SK-N-SH (cell line): ENCODE measurements at regions of chr10 and their contacts with region 1.

Region 1: DNA sequence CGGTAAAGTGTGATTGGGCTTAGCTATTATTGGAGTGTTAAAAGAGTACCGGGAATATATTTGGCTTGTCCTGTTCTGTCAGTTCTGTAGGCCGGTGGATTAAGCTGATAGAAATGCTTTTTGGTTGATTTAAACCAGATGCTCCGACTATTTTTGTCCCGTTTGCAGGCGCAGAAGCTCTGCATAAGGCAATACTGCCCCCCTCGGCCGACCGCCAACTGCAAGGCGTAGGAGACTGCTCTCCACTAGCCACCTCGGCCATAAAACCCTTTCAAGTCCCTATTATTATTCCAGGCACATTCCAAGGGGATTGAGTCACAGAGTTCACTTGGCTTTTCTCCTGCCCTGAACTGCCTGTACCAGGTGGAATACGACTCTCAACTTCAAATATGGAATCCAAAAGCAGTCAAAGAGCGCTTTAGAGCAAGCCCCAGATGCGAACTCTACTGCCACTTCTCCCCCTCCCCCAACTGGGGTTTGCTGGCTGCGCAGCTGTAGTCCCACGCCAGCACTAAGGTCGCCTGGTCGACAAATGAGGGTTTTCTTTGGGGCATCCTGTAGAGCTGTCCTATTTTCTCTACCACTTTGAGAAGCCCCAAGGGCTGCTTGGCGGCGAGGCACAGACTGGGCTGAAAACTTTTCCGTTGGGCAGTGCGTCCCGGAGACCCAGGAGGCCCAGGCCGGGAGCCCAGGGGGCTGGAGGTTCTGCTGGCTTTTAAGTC is 108.3 kb downstream of the REEP3 start:
- DNase-seq: peak; percentile 65
- H3K4me3 ChIP-seq: peak overlapping the region; percentile 64 to 73
- H3K27ac ChIP-seq: peak overlapping the region; percentile 100
- H3K4me1 ChIP-seq: peaks cover 25 to 27% of the 10 kb centered on the region in 2 experiments
- H3K27me3 ChIP-seq: no peaks in the 10 kb centered on the region
- CTCF ChIP-seq: peak; percentile 91
- EP300 ChIP-seq: peak; percentile 76 to 78
- RAD21 ChIP-seq: peak; percentile 94

Region 2: DNA sequence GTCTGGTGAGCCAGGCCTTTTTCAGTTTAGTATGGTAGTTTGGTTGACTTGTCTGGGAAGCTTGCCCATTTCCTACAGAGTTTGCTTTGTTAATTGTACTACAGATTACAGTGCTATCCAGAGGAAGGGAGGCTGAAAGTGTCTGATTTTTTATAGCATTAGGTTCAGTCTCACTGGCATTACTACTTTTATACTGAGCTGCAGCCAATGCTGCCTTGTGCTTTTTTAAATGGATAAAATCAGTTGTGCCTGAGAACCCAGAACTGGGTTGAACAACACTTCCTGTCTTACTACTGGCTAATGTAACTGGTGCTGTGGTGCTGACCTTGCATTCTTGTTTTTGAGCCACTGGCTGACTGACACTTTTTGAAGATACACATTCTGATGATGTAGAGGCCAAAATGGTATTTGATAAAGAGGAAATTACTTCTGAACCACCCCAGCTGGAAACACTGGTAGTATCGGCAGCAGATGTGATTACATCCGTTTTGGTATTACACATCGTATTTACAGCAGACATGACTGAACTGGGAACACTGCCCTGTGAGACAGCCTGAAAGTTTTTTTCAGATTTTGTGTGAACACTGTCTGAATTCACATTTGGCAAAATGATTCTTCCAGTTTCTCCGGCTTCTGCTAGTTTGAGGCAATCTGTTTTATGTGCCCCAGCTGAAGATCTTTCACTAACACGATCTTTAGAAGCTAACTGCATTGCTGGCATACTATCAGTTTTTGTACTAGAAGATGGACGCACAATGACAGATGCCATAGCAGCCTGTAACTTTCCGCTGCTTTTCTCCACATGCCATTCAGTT is 422.3 kb before region 1 on chr10:
- CTCF ChIA-PET with region 1: interaction called, 11 read pairs
- POLR2A ChIA-PET with region 1: no interaction called
- DNase-seq: peak; percentile 15
- H3K4me3 ChIP-seq: peak overlapping the region; percentile 26 to 32; a peak in 3 of 4 replicates
- H3K27ac ChIP-seq: peak overlapping the region; percentile 85 to 91
- H3K4me1 ChIP-seq: peaks cover 34 to 44% of the 10 kb centered on the region in 2 experiments
- H3K27me3 ChIP-seq: no peaks in the 10 kb centered on the region
- CTCF ChIP-seq: no peak
- EP300 ChIP-seq: no peak
- RAD21 ChIP-seq: no peak

Region 3: GRCh38 chr10:63268798-63269503 is 360.6 kb before region 1 on chr10:
- CTCF ChIA-PET with region 1: interaction called, 7 read pairs
- POLR2A ChIA-PET with region 1: interaction called, 10 read pairs
- DNase-seq: peak; percentile 49
- H3K4me3 ChIP-seq: peak overlapping the region; percentile 71 to 79
- H3K27ac ChIP-seq: peak overlapping the region; percentile 98 to 99
- H3K4me1 ChIP-seq: peaks cover 0 to 5% of the 10 kb centered on the region in 2 experiments; a peak in 1 of 4 replicates
- H3K27me3 ChIP-seq: no peaks in the 10 kb centered on the region
- CTCF ChIP-seq: peak; percentile 46
- EP300 ChIP-seq: peak in 1 of 2 experiments; percentile 53; a peak in 1 of 4 replicates
- RAD21 ChIP-seq: no peak; the same call in 1 of the 2 replicates

Region 4: DNA sequence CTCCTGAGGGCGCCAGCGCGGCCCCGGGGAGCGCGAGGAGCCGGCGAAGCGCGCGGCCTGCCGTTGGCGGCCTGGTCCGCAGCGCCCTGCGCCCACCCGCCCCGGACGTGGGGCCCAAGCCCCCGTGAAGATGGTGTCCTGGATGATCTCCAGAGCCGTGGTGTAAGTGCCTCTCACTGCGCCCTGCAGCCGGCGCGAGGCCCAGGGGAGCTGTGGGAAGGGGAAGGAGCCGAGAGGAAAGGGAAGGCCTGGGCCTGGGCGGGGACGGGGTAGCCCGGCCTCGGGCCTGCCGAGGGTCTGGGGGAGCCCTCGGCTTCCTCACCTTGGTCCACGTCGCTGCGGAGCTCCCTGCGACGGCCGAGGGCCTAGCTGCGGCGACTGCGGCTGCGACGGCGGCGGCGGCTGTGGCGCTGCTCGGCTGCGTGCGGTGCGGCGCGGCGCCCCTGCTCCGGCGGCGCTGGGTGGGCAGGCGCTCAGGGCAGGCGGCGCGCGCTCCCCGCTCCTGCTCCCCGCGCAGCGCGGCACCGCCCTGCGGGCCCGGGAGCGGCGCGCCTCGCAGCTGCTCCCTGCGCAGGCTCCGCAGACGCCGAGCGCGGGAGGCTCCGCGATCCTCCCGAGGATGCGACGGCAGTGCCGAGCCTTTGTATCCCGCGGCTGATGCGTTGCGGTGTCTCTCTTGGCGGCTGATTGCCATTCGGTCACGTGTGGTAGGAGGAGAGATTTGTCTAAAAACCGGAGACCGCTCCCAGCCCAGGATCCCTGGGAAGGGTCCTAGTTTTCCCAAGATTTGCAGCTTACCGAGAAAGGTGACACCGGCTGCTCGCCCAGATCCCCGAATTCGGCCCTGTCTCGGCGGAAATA is 107.9 kb before region 1 on chr10:
- CTCF ChIA-PET with region 1: interaction called, 19 read pairs
- POLR2A ChIA-PET with region 1: interaction called, 52 read pairs
- DNase-seq: peak; percentile 90
- H3K4me3 ChIP-seq: peak overlapping the region; percentile 75 to 91
- H3K27ac ChIP-seq: peak overlapping the region; percentile 90 to 98
- H3K4me1 ChIP-seq: peaks cover 15 to 19% of the 10 kb centered on the region in 2 experiments; a peak in 3 of 4 replicates
- H3K27me3 ChIP-seq: no peaks in the 10 kb centered on the region
- CTCF ChIP-seq: no peak
- EP300 ChIP-seq: 0 out of 4 replicates have a peak, but pooled peaks of 1 of the 2 experiments have one; percentile 1
- RAD21 ChIP-seq: no peak

Region 5: GRCh38 chr10:63542835-63543575 is 86.5 kb before region 1 on chr10:
- CTCF ChIA-PET with region 1: interaction called, 36 read pairs
- POLR2A ChIA-PET with region 1: interaction called, 11 read pairs
- DNase-seq: no peak
- H3K4me3 ChIP-seq: no peak overlapping the region
- H3K27ac ChIP-seq: peak overlapping the region in 1 of 2 experiments; percentile 77; a peak in 2 of 4 replicates
- H3K4me1 ChIP-seq: peaks cover 10 to 38% of the 10 kb centered on the region in 2 experiments; a peak in 3 of 4 replicates
- H3K27me3 ChIP-seq: no peaks in the 10 kb centered on the region
- CTCF ChIP-seq: no peak
- EP300 ChIP-seq: no peak
- RAD21 ChIP-seq: no peak

Region 6: GRCh38 chr10:63700209-63700613 is 70.7 kb after region 1 on chr10:
- CTCF ChIA-PET with region 1: interaction called, 11 read pairs
- POLR2A ChIA-PET with region 1: interaction called, 4 read pairs
- DNase-seq: no peak
- H3K4me3 ChIP-seq: peak overlapping the region in 1 of 2 experiments; percentile 8; a peak in 2 of 4 replicates
- H3K27ac ChIP-seq: peak overlapping the region; percentile 95 to 99
- H3K4me1 ChIP-seq: peaks cover 22 to 61% of the 10 kb centered on the region in 2 experiments
- H3K27me3 ChIP-seq: no peaks in the 10 kb centered on the region
- CTCF ChIP-seq: no peak
- EP300 ChIP-seq: peak in 1 of 2 experiments; percentile 84; a peak in 2 of 4 replicates
- RAD21 ChIP-seq: no peak